Heart left ventricle (tissue), 16 donors: ENCODE measurements at regions of chr7 and their contacts with region 1.

Region 1: DNA sequence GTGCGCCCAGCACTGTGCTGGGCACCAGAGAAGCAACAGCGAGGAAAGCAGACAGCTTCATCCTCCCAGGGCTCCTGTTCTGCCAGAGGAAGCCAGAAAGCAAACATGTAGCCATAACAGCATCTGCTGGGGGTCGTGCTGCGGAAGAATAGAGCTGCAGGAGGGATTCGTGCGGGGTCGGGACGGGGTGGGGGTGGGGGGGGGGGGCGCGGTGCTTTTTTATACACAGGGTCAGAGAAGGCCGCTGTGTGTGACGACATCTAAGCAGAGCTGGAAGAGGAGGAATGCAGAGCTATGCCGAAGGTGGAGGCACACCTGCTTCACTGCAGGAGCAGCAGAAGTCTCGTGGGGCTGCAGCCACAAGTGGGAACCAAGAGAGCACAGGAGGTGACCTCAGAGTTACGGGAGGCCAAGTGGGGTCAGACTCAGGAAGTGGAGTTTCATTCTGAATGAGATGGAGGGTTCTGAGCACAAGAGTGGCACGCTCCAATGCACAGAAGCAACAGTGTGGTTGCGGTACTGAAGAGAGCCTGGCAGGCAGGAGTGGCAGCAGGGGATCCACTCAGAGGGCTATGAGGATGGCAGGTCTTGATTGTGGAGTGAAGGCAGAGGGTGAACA is 11.1 kb downstream of the PKD1L1 start:
- DNase-seq: no peak
- ATAC-seq: no peak
- H3K4me3 ChIP-seq: no peak overlapping the region
- H3K27ac ChIP-seq: no peak overlapping the region
- H3K4me1 ChIP-seq: peaks cover 0 to 51% (median 30%) of the 10 kb centered on the region in 12 donors
- H3K27me3 ChIP-seq: no peaks in the 10 kb centered on the region
- CTCF ChIP-seq: no peak
- POLR2A ChIP-seq: no peak

Region 2: GRCh38 chr7:47846117-47846836 is 90.9 kb before region 1 on chr7:
- intact Hi-C with region 1: loop called in 1 of 10 experiments (anchors 5 kb)
- DNase-seq: no peak
- ATAC-seq: peak; percentile 32 to 70 (median 56)
- H3K4me3 ChIP-seq: no peak overlapping the region
- H3K27ac ChIP-seq: peak overlapping the region in 9 of 12 donors; percentile 13 to 62 (median 38)
- H3K4me1 ChIP-seq: peaks cover 0 to 22% (median 8%) of the 10 kb centered on the region in 12 donors
- H3K27me3 ChIP-seq: no peaks in the 10 kb centered on the region
- CTCF ChIP-seq: no peak
- POLR2A ChIP-seq: no peak

Region 3: GRCh38 chr7:47979145-47979831 is 42.1 kb after region 1 on chr7 and contains the start of gene HUS1:
- intact Hi-C with region 1: loop called in 1 of 10 experiments (anchors 5 kb)
- DNase-seq: peak; percentile 88 to 96 (median 95)
- ATAC-seq: peak; percentile 97 to 100 (median 99)
- H3K4me3 ChIP-seq: peak within 1 kb of the TSS; percentile 61 to 90 (median 70)
- H3K27ac ChIP-seq: peak within 1 kb of the TSS; percentile 67 to 90 (median 86)
- H3K4me1 ChIP-seq: peaks cover 3 to 20% (median 12%) of the 10 kb centered on the region in 12 donors
- H3K27me3 ChIP-seq: no peaks in the 10 kb centered on the region
- CTCF ChIP-seq: peak in 1 of 12 donors; percentile 21
- POLR2A ChIP-seq: peak in 1 of 2 donors; percentile 77
- total RNA-seq, gene HUS1: 21.9 to 43.3 (median 27.5) TPM